ENCODE measurements at regions of chr2 and their contacts with region 1.

Region 1: DNA sequence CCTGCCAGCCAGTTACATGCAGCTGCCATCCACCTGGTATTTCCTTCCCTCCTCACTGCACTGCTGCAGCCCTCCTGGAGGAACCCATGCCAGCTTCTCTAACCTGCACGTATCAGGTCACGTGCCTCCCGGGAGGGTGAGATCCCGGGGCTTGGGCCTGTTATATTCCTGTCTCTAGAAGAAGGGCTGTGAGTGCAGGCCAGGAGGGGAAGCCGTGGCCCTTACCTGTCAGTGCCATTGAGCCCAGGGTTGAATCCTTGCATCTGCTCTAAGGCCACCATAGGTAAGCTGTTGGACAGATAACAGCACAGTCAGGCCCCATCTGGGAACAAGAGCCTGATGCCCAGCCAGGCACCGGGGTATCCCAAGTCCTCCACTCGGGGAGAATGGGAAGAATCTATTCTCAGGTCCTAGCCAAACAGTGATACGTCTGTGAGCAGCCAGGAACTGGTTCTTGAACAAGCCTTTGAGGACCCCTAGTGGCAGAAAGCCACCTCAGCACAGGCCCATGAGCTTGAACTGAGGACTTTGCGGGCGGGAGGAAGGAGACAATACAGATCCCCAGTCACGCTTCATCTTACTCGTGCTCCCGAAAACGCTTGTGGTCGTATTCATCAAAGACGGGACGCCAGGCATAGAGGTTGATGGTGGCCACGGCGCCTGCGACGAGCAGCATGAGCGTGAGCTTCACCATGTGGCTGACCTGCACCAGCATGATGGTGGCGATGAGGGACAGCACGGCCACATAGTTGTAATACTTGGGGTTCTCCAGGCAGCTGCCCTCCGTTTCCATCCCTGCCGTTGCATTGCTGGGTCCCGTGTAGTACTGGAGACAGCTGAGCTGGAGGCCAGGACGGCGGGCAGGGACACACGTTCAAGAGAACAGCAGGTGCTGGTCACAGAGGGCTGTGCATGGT is 34.4 kb downstream of the CENPO start:
- DNase-seq: peak; percentile 89
- ATAC-seq: peak; percentile 97
- H3K4me3 ChIP-seq: no peak overlapping the region
- H3K27ac ChIP-seq: no peak overlapping the region
- H3K4me1 ChIP-seq: no peaks in the 10 kb centered on the region
- H3K27me3 ChIP-seq: no peaks in the 10 kb centered on the region
- CTCF ChIP-seq: peak; percentile 94
- POLR2A ChIP-seq: peak; percentile 37; the same call in 1 of the 2 replicates
- RAD21 ChIP-seq: peak; percentile 94

Region 2: DNA sequence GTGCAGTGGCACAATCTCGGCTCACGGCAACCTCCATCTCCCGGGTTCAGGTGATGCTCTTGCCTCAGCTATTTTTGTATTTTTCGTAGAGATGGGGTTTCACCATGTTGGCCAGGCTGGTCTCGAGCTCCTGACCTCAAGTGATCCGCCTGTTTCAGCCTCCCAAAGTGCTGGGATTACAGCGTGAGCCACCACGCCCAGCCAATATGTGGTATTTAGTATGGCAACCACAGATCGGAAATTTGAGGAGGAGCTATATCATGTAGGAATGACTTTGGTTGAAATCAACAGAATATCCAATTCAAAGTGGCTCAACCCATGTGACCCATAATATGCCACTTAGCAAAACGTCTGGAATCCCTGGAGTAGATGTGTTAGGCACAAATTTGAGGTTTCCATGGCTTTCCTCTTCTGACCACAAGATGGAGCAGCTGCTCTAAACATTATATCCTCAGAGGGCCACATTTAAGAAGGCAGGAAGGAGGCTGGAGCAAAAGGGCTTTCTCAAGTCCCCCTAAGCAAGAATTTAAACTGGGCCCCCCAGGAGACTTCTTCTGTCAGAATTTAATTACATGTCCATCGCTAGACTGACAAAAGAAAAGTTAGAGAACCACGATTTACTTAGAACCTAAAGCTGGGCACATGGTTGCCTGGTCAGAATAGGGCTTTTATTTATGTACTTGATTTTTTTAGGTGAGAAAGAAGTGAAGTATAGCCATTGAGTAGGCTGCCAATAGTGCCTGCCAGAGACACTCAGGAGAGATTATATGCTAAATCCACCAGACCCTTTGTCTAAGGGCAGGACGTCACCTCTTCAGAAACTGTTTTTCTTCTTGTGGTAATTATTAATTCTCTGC is 417.7 kb before region 1 on chr2:
- CTCF ChIA-PET with region 1: interaction called, 7 read pairs
- POLR2A ChIA-PET with region 1: no interaction called
- dilution Hi-C with region 1: no loop called
- in situ Hi-C with region 1: loop called (anchors 5 kb)
- intact Hi-C with region 1: loop called (anchors 1 kb)
- DNase-seq: peak; percentile 74
- ATAC-seq: peak; percentile 91
- H3K4me3 ChIP-seq: no peak overlapping the region
- H3K27ac ChIP-seq: no peak overlapping the region
- H3K4me1 ChIP-seq: no peaks in the 10 kb centered on the region
- H3K27me3 ChIP-seq: peaks cover 2% of the 10 kb centered on the region
- CTCF ChIP-seq: peak; percentile 86
- POLR2A ChIP-seq: no peak
- RAD21 ChIP-seq: peak; percentile 86

Region 3: DNA sequence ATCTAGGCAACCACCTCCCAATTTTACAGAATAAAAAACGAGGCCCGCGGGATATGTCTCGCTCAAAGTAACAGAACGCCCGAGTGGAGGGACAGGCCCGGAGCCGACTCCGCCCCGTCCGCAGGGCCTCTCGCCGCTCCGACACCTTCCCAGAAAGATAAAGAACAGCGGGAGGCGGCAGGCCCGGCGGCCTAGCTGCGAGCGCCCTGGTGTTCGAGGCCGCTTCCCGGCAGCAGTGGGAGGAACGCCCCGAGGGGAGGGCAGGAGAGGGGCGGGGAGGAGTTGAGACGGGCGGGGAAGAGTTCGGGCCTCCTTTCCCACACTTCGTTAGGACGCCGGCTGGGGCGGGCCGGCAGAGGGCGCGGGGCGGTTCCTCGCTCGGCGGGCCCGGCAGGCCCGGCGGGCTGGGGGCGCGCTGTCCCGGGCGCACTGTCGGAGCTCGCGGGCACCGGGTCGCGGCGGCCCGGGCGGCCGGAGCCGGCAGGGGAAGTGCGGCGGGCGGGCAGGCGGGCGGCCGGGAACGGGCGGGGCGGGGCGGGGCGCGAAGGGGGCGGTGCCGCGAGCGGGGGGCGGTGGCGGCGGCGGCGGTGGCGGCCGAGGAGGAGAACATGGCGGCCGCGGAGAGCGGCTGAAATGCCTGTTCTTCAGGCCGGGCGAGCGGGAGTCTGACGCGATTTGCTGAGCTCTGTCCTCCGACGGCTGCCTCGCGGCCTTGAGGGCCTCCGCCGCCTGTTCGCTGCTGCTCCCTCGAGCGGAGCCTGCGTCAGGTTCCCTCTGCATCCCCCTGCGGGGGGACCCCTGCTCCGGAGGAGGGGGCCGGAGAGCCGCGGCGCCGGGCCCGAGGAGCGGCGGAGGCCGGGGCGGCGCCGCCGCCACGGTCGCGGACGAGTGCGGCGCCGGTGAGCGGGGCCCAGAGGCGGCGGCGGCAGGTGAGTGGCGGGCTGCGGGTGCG is 336.6 kb before region 1 on chr2 and contains the start of gene NCOA1:
- CTCF ChIA-PET with region 1: no interaction called
- POLR2A ChIA-PET with region 1: no interaction called
- dilution Hi-C with region 1: no loop called
- in situ Hi-C with region 1: no loop called
- intact Hi-C with region 1: loop called (anchors 5 kb)
- DNase-seq: peak; percentile 85
- ATAC-seq: peak; percentile 90
- H3K4me3 ChIP-seq: peak within 1 kb of the TSS; percentile 94
- H3K27ac ChIP-seq: peak within 1 kb of the TSS; percentile 100
- H3K4me1 ChIP-seq: peaks cover 7% of the 10 kb centered on the region
- H3K27me3 ChIP-seq: no peaks in the 10 kb centered on the region
- CTCF ChIP-seq: peak; percentile 26; the same call in 1 of the 2 replicates
- POLR2A ChIP-seq: peak; percentile 35; the same call in 1 of the 2 replicates
- RAD21 ChIP-seq: no peak
- total RNA-seq, gene NCOA1: 11.3 and 13.1 TPM in 2 replicates

Region 4: GRCh38 chr2:24792874-24793760 is 34.5 kb before region 1 on chr2 and contains the starts of genes CENPO and PTRHD1:
- CTCF ChIA-PET with region 1: no interaction called
- POLR2A ChIA-PET with region 1: no interaction called
- dilution Hi-C with region 1: no loop called
- in situ Hi-C with region 1: no loop called
- intact Hi-C with region 1: loop called (anchors 1 kb)
- DNase-seq: peak; percentile 96
- ATAC-seq: peak; percentile 98
- H3K4me3 ChIP-seq: peak within 1 kb of the TSS; percentile 75
- H3K27ac ChIP-seq: peak within 1 kb of the TSS; percentile 96
- H3K4me1 ChIP-seq: peaks cover 2% of the 10 kb centered on the region
- H3K27me3 ChIP-seq: no peaks in the 10 kb centered on the region
- CTCF ChIP-seq: peak; percentile 60
- POLR2A ChIP-seq: peak; percentile 79; the same call in 1 of the 2 replicates
- RAD21 ChIP-seq: peak; percentile 48
- total RNA-seq, gene CENPO: 24.2 and 27.2 TPM in 2 replicates
- total RNA-seq, gene PTRHD1: 11.7 and 17.2 TPM in 2 replicates

Region 5: DNA sequence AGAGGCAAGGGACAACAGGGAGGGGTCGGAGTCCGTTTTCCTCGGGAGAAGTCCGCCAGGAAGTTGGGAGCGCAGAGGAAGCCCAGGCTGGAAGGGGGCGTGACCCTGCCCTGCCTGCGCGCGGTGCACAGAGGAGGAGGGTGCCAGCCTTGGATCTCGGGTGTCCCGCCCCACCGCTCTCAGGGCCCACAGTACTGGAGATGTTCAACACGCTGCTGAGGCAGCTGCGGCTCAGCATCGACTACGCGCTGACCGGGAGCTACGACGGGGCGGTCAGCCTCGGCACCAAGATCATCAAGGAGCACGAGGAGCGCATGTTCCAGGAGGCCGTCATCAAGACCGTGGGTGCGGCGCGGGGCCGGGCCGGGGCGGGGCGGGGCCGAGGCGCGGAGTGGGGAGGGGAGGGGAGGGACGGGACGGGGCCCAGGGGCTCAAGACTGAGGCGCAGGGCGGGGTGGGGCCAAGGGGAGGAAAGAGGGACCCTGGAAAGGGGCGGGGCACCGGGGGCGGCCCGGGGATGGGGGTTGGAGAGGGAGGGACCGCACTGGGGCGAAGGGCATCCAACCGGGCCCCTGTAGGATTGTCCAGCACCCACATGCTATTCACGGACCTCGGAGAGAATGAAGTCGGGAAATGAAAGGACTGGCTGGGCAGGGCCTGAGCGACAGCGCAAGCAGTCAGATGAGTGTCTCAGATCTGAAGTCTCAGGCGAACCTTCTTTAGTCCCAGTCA is 304.2 kb after region 1 on chr2:
- CTCF ChIA-PET with region 1: no interaction called
- POLR2A ChIA-PET with region 1: no interaction called
- dilution Hi-C with region 1: no loop called
- in situ Hi-C with region 1: no loop called
- intact Hi-C with region 1: loop called (anchors 10 kb)
- DNase-seq: no peak
- ATAC-seq: no peak
- H3K4me3 ChIP-seq: no peak overlapping the region
- H3K27ac ChIP-seq: no peak overlapping the region
- H3K4me1 ChIP-seq: peaks cover 1% of the 10 kb centered on the region; the same call in 1 of the 2 replicates
- H3K27me3 ChIP-seq: peaks cover 6% of the 10 kb centered on the region
- CTCF ChIP-seq: no peak
- POLR2A ChIP-seq: no peak
- RAD21 ChIP-seq: no peak